Activated B cell treated with CpG ODN at 0.5 μM for 24 hours (primary cell): ENCODE measurements at regions of chr7 and their contacts with region 1.

Region 1: DNA sequence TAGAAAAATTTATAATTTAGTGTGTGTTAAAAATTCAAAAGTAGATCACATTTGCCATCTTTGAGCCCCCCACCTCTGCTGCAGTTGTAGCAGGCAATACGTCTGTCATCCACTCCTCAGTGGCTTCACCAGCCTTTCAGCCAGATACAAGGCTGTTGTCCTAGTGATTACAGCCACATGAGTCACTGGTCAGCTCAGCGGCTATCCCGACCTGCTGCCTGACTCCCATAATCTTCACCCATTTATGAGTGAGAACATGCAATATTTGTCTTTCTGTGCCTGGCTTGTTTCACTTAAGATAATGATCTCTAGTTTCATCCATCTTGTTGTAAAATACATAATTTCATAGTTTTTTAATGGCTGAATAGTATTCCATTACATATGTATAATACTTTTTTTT is 9.2 kb downstream of the OR2A5 start:
- DNase-seq: no peak
- ATAC-seq: no peak
- H3K4me3 Mint-ChIP-seq: no peak overlapping the region
- H3K27ac Mint-ChIP-seq: no peak overlapping the region
- H3K4me1 Mint-ChIP-seq: no peaks in the 10 kb centered on the region
- H3K27me3 Mint-ChIP-seq: peaks cover 7% of the 10 kb centered on the region
- CTCF ChIP-seq: no peak

Region 2: DNA sequence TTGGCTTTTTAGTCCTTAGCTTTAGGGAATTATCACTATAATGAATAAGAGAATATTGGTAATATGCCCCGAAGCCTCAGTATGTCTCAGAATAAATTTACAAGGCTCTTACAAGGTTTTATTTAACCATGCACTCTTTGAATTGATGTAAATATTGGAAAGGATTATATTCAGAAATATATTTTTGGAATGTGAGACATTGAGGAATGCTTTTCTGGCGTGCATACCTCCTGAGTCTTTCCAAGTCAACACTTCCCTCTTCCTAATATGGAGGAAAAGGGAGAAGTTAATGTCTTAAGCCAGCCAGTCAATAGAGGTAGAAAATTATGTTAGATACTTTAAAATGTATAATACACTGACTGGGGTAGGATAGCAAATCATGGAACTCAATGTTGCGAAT is 104.6 kb before region 1 on chr7:
- CTCF ChIA-PET with region 1: no interaction called
- POLR2A ChIA-PET with region 1: no interaction called
- intact Hi-C with region 1: no loop called
- DNase-seq: no peak
- ATAC-seq: no peak
- H3K4me3 Mint-ChIP-seq: no peak overlapping the region
- H3K27ac Mint-ChIP-seq: no peak overlapping the region
- H3K4me1 Mint-ChIP-seq: no peaks in the 10 kb centered on the region
- H3K27me3 Mint-ChIP-seq: peaks cover 7% of the 10 kb centered on the region
- CTCF ChIP-seq: no peak

Region 3: DNA sequence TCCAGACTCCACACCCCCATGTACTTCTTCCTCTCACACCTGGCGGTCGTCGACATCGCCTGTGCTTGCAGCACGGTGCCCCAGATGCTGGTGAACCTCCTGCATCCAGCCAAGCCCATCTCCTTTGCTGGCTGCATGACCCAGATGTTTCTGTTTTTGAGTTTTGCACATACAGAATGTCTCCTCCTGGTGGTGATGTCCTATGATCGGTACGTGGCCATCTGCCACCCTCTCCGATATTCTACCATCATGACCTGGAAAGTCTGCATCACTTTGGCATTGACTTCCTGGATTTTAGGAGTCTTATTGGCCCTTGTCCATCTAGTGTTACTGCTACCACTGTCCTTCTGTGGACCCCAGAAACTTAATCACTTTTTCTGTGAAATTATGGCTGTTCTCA is 16.4 kb after region 1 on chr7:
- CTCF ChIA-PET with region 1: no interaction called
- POLR2A ChIA-PET with region 1: no interaction called
- intact Hi-C with region 1: loop called (anchors 2 kb)
- DNase-seq: no peak
- ATAC-seq: no peak
- H3K4me3 Mint-ChIP-seq: no peak overlapping the region
- H3K27ac Mint-ChIP-seq: no peak overlapping the region
- H3K4me1 Mint-ChIP-seq: no peaks in the 10 kb centered on the region
- H3K27me3 Mint-ChIP-seq: peaks cover 8% of the 10 kb centered on the region
- CTCF ChIP-seq: no peak